Heart right ventricle (tissue), 16 donors: ENCODE measurements at regions of chr1 and their contacts with region 1.

Region 1: GRCh38 chr1:153587314-153587713 is 21.7 kb upstream of the S100A2 start:
- DNase-seq: no peak
- ATAC-seq: peak in 3 of 8 donors; percentile 53 to 67 (median 55)
- H3K4me3 ChIP-seq: no peak overlapping the region
- H3K27ac ChIP-seq: no peak overlapping the region
- H3K4me1 ChIP-seq: peaks cover 0 to 9% (median 0%) of the 10 kb centered on the region in 9 donors
- H3K27me3 ChIP-seq: no peaks in the 10 kb centered on the region
- CTCF ChIP-seq: no peak

Region 2: DNA sequence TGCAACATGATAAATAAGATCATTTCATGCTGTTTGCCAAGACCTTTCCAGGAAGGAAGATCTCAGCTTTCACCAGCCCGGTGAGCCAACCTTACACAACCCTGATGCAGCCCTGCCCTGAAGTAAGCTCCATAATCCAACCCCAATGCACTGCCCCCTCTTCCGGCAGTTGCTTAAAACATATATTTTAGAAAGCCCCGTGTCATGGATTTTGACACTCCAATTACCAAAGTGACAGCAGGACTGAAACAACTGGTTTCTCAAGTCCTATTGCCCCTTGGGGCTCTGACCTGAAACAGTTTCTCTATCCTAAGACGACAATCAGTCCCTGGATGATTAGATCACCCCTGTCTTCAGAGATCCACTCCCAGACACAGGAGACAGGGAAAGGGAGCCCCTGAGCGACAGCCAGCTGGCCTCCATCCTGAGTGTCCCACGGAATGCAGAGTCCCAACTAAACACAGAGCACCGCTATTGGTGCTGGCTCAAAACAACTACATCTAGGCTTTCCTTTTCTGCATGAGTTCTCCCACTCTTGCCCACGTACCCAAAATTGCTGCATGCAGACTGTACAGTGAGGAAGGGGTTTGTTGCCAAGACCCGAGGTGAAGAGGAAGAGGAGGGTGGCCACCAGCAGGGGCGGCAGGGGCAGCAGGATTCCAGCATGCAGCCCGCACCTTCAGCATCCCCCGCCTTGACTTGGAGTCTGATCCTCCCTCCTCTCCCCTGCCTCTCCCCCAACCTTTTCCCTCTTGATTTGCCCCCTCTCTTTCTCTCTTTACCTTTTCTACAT is 221.8 kb before region 1 on chr1:
- intact Hi-C with region 1: loop called in 1 of 10 experiments (anchors 5 kb)
- DNase-seq: no peak
- ATAC-seq: no peak
- H3K4me3 ChIP-seq: no peak overlapping the region
- H3K27ac ChIP-seq: peak overlapping the region in 1 of 10 donors; percentile 68
- H3K4me1 ChIP-seq: peaks cover 0 to 75% (median under 1%) of the 10 kb centered on the region in 9 donors
- H3K27me3 ChIP-seq: peaks cover 0 to 3% (median 0%) of the 10 kb centered on the region in 7 donors
- CTCF ChIP-seq: no peak

Region 3: DNA sequence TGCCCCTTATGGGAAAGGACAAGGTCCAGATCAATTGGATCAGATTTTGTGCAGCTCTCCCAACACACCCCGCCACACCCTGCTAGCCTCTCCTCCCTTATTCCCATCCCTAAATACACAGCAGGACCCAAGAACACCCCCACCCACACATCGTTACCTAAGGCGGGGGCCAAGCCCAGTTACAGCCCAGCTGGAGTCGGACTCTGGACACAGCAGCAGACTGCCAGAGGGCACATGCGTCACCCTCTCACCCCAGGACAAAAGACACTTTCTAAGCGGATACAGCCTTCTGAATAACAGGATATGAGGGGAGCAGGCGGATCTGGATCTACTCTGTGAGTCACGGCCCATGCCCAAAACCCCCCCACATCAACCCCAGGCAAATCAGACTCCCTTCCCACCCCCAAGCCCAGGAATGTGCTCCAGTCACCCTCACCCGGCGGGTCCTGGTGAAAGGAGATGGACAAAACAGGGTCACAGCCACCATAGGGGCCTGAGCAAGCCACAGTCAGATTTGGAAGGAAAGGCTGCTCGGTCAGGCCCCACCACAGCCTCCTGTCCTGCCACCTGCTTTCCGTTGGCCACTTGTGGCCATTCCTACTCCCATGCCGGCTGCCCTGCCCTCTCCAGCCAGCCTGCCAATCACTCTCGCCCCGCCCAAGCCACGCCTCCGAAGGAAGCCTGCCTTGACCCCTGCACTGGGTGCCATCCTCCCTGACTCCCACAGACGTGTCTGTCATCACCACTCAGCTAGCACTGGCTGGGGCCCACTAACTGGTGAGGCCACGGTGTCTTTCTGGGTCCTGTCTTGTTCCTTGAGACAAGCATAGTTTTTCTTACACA is 21.6 kb after region 1 on chr1:
- intact Hi-C with region 1: no loop called
- DNase-seq: peak; percentile 78 to 88
- ATAC-seq: peak; percentile 72 to 89 (median 80)
- H3K4me3 ChIP-seq: peak overlapping the region; percentile 38 to 73 (median 55)
- H3K27ac ChIP-seq: peak overlapping the region; percentile 90 to 99 (median 96)
- H3K4me1 ChIP-seq: peaks cover 10 to 57% (median 35%) of the 10 kb centered on the region in 9 donors
- H3K27me3 ChIP-seq: no peaks in the 10 kb centered on the region
- CTCF ChIP-seq: no peak

Region 4: GRCh38 chr1:153805042-153805745 is 217.9 kb after region 1 on chr1:
- intact Hi-C with region 1: no loop called
- DNase-seq: peak in 1 of 2 donors; percentile 80
- ATAC-seq: peak; percentile 68 to 94 (median 80)
- H3K4me3 ChIP-seq: no peak overlapping the region
- H3K27ac ChIP-seq: peak overlapping the region; percentile 50 to 82 (median 66)
- H3K4me1 ChIP-seq: peaks cover 3 to 46% (median 31%) of the 10 kb centered on the region in 9 donors
- H3K27me3 ChIP-seq: no peaks in the 10 kb centered on the region
- CTCF ChIP-seq: no peak